A673 (cell line): ENCODE measurements at regions of chr1 and their contacts with region 1.

Region 1: GRCh38 chr1:160006312-160006940 is 25.4 kb downstream of the PIGM start:
- DNase-seq: peak; percentile 74
- H3K4me3 ChIP-seq: no peak overlapping the region
- H3K27ac ChIP-seq: no peak overlapping the region
- H3K4me1 ChIP-seq: no peaks in the 10 kb centered on the region
- H3K27me3 ChIP-seq: no peaks in the 10 kb centered on the region
- CTCF ChIP-seq: peak; percentile 96

Region 2: DNA sequence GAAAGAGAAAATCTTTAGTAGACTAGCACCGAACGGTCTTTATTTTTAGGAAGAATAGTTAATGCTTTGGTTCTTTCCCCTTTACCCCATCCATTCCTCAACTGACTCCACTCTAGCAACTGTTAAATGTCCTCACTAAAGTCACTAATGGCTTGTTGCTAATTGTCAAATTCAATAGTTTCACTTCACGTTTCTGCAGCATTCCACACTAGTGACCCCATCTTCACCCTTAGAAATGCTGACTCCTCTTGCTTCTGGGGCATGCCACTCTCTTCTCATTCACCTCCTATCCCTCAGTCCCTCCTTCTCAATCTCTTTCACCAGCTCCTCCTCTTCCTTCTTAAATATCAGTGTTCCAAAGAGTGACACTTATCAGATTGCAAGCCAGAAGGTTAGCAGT is 854.4 kb before region 1 on chr1:
- CTCF ChIA-PET with region 1: no interaction called
- POLR2A ChIA-PET with region 1: no interaction called
- intact Hi-C with region 1: loop called (anchors 5 kb)
- DNase-seq: no peak
- H3K4me3 ChIP-seq: no peak overlapping the region
- H3K27ac ChIP-seq: no peak overlapping the region
- H3K4me1 ChIP-seq: no peaks in the 10 kb centered on the region
- H3K27me3 ChIP-seq: peaks cover 28% of the 10 kb centered on the region
- CTCF ChIP-seq: no peak

Region 3: GRCh38 chr1:159483501-159483900 is 522.9 kb before region 1 on chr1:
- CTCF ChIA-PET with region 1: no interaction called
- POLR2A ChIA-PET with region 1: interaction called, 32 read pairs
- intact Hi-C with region 1: no loop called
- DNase-seq: no peak
- H3K4me3 ChIP-seq: no peak overlapping the region
- H3K27ac ChIP-seq: no peak overlapping the region
- H3K4me1 ChIP-seq: no peaks in the 10 kb centered on the region
- H3K27me3 ChIP-seq: peaks cover 9% of the 10 kb centered on the region
- CTCF ChIP-seq: no peak

Region 4: GRCh38 chr1:159798893-159799292 is 207.5 kb before region 1 on chr1:
- CTCF ChIA-PET with region 1: interaction called, 8 read pairs
- POLR2A ChIA-PET with region 1: no interaction called
- intact Hi-C with region 1: loop called (anchors 2 kb)
- DNase-seq: peak; percentile 90
- H3K4me3 ChIP-seq: no peak overlapping the region
- H3K27ac ChIP-seq: no peak overlapping the region
- H3K4me1 ChIP-seq: no peaks in the 10 kb centered on the region
- H3K27me3 ChIP-seq: peaks cover 7% of the 10 kb centered on the region
- CTCF ChIP-seq: peak; percentile 88

Region 5: DNA sequence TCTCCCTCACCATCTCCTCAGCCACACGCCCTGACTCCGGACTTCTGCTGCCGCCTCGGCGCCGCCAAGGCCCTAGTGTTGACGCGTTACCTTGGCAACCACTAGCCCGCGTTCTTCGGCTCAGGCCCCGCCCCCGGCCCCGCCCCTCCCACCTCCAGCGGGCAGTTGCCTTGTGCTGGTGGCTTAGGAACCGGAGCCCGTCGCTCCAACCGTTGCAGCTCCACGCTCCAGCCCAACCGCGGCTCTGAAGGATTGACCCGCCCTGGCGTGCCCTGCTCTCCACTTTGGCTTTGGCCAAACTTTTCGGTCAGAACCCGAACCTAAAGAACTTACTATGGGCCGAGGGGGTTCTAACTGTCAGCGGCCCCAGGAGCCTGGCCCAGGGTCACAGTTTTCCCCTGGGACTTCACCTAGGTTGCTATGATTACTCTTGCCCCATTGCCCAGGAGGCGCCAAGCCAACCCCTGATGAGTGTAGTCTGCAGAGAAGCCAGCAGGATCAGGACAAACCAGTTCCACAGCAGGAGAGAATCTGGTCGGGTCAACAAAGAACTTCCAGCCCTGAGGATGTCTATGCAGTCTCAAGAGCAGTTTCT is 106.2 kb before region 1 on chr1 and contains the start of gene CFAP45:
- CTCF ChIA-PET with region 1: interaction called, 10 read pairs
- POLR2A ChIA-PET with region 1: no interaction called
- intact Hi-C with region 1: no loop called
- DNase-seq: peak; percentile 83
- H3K4me3 ChIP-seq: no peak within 1 kb of the TSS
- H3K27ac ChIP-seq: no peak within 1 kb of the TSS
- H3K4me1 ChIP-seq: peaks cover 11% of the 10 kb centered on the region
- H3K27me3 ChIP-seq: no peaks in the 10 kb centered on the region
- CTCF ChIP-seq: no peak
- total RNA-seq, gene CFAP45: 1.5 and 3.6 TPM in 2 replicates

Region 6: DNA sequence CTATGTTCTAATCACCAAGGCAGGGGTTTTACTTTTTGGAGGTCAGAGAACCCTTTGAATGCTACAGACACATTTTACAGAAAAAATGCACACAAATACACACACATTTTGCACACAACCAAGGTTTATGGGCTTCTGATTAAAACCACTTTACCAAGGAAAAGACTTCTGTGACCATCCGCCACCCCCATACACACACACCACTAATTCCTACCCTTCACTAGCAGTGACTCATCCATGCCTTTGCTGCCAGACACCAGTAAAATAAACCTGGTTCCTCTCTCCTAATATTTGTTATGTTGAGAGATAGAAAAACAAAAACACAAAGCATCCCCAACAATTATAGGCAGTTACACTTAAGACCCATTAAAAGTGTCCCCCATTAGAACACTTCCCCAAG is 12.5 kb after region 1 on chr1:
- CTCF ChIA-PET with region 1: interaction called, 11 read pairs
- POLR2A ChIA-PET with region 1: no interaction called
- intact Hi-C with region 1: no loop called
- DNase-seq: no peak
- H3K4me3 ChIP-seq: no peak overlapping the region
- H3K27ac ChIP-seq: no peak overlapping the region
- H3K4me1 ChIP-seq: no peaks in the 10 kb centered on the region
- H3K27me3 ChIP-seq: no peaks in the 10 kb centered on the region
- CTCF ChIP-seq: no peak